ENCODE measurements at regions of chr6 and their contacts with region 1.

Region 1: GRCh38 chr6:70706491-70707123 is 38.9 kb downstream of the SMAP1 start:
- DNase-seq: no peak
- H3K4me3 Mint-ChIP-seq: no peak overlapping the region
- H3K27ac Mint-ChIP-seq: no peak overlapping the region
- H3K4me1 Mint-ChIP-seq: peaks cover 41% of the 10 kb centered on the region
- H3K27me3 Mint-ChIP-seq: no peaks in the 10 kb centered on the region

Region 2: GRCh38 chr6:70221025-70221714 is 485.4 kb before region 1 on chr6:
- CTCF ChIA-PET with region 1: no interaction called
- intact Hi-C with region 1: loop called (anchors 5 kb)
- DNase-seq: no peak
- H3K4me3 Mint-ChIP-seq: no peak overlapping the region
- H3K27ac Mint-ChIP-seq: no peak overlapping the region
- H3K4me1 Mint-ChIP-seq: no peaks in the 10 kb centered on the region
- H3K27me3 Mint-ChIP-seq: peaks cover 13% of the 10 kb centered on the region

Region 3: DNA sequence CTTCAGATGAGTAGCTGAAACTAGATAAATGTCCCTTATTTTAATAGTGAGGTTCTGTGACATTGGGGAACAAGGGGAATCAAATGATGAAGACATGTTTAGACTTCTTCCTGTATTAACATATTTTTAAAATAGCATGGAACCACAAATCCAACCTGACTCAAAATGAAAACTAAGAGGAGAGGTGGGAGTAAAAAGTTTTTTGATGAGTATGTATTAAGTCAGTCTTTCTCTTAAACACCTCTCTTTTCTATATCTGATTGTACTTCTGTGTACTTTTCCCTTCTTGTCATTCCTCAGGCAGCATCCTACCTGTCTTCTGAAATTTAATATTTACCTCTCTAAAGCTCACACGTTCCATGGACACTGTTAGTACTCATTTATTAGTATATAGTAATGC is 148.6 kb before region 1 on chr6:
- CTCF ChIA-PET with region 1: no interaction called
- intact Hi-C with region 1: no loop called
- DNase-seq: no peak
- H3K4me3 Mint-ChIP-seq: no peak overlapping the region
- H3K27ac Mint-ChIP-seq: peak overlapping the region; percentile 64
- H3K4me1 Mint-ChIP-seq: peaks cover 21% of the 10 kb centered on the region
- H3K27me3 Mint-ChIP-seq: no peaks in the 10 kb centered on the region

Region 4: DNA sequence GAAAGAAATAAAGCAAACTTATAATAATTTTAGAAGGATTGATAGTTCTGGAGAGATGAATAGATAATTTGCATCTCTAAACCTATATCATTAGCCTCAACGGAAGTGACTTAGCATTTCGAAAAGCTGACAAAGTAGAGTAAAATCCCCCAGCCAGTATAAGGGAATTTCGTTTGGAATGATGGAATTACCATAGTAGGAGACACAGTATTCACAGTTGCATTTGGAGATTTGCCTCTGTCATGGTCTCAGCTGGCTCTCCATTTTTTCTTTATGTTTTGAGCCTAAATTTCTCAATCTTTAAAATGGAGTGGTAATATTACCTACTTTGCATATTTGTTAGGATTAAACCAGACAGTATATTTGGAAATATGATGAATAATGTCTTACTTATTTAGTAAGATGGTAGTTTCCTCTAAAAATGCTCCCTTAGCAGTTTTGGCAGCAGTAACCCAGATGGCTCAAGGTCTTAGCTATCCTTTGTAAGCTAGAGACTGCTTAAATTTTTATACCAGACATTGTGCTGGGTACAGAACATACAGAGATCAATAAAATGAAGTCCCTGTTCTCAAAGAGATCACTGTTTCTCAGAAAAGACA is 19.3 kb after region 1 on chr6:
- CTCF ChIA-PET with region 1: interaction called, 4 read pairs
- intact Hi-C with region 1: loop called (anchors 2 kb)
- DNase-seq: no peak
- H3K4me3 Mint-ChIP-seq: no peak overlapping the region
- H3K27ac Mint-ChIP-seq: no peak overlapping the region
- H3K4me1 Mint-ChIP-seq: peaks cover 41% of the 10 kb centered on the region
- H3K27me3 Mint-ChIP-seq: no peaks in the 10 kb centered on the region

Region 5: DNA sequence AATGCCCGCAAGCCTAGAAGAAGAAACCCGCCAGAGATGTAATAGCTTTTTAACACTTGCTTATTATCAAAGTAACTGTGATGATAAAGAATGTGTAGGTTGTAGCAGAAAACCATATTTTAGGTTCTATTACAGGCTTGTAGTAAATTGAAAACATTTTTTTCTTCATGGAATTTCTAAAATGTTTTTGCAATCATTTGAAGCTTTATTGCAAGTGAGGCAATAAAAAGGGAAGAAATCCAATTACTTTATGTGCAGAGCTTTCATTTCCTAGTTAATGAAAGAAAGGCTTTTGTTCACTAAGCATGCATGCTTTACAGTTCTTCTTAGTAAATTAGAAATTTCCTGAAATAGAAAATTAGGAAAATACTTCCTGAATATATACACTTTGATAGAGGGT is 115.1 kb after region 1 on chr6:
- CTCF ChIA-PET with region 1: interaction called, 10 read pairs
- intact Hi-C with region 1: no loop called
- DNase-seq: no peak
- H3K4me3 Mint-ChIP-seq: no peak overlapping the region
- H3K27ac Mint-ChIP-seq: no peak overlapping the region
- H3K4me1 Mint-ChIP-seq: no peaks in the 10 kb centered on the region
- H3K27me3 Mint-ChIP-seq: no peaks in the 10 kb centered on the region

Region 6: DNA sequence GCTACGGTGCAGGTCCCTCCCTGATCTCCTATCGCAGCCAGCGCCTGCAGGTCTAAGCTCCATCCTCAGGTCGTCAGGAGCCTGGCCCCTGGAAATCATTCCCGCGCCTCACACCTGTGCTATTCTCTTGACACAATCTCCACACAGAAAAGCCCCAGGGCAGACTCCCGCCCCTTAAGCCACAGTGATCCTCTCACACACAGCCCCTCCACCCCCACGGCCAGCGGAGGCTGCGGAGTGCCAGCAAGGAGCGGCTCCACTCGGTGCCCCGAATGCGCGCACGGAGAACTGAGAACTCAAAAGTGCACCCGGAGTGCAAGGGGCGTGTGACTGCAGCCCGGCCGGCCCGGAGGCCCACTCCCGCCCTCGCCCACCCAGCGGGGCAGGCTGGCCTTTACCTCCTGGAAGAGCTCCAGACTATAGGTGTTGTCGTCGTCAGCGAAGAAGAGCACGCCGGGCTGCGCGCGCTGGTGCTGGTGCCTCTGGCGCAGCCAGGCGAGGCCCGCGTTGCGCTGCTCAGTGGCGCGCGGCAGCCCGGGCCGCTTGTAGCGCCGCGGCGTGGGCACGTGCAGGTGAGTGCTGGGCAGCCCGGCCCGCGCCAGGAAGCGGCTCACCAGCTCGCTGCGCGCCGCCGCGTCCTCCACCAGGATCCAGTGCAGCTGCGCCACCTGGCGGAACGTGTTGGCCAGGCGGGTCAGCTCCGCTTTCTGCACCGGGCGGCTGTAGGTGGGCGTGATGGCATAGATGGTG is 249.0 kb after region 1 on chr6:
- CTCF ChIA-PET with region 1: interaction called, 25 read pairs
- intact Hi-C with region 1: loop called (anchors 1 kb)
- DNase-seq: peak; percentile 93
- H3K4me3 Mint-ChIP-seq: peak overlapping the region; percentile 74
- H3K27ac Mint-ChIP-seq: no peak overlapping the region
- H3K4me1 Mint-ChIP-seq: peaks cover 4% of the 10 kb centered on the region
- H3K27me3 Mint-ChIP-seq: peaks cover 49% of the 10 kb centered on the region

Region 7: GRCh38 chr6:71072508-71072907 is 365.9 kb after region 1 on chr6:
- CTCF ChIA-PET with region 1: no interaction called
- intact Hi-C with region 1: no loop called
- DNase-seq: no peak
- H3K4me3 Mint-ChIP-seq: no peak overlapping the region
- H3K27ac Mint-ChIP-seq: no peak overlapping the region
- H3K4me1 Mint-ChIP-seq: no peaks in the 10 kb centered on the region
- H3K27me3 Mint-ChIP-seq: peaks cover 3% of the 10 kb centered on the region

Region 8: GRCh38 chr6:71349395-71349794 is 642.8 kb after region 1 on chr6:
- CTCF ChIA-PET with region 1: interaction called, 3 read pairs
- intact Hi-C with region 1: loop called (anchors 5 kb)
- DNase-seq: no peak
- H3K4me3 Mint-ChIP-seq: no peak overlapping the region
- H3K27ac Mint-ChIP-seq: no peak overlapping the region
- H3K4me1 Mint-ChIP-seq: peaks cover 2% of the 10 kb centered on the region
- H3K27me3 Mint-ChIP-seq: peaks cover 2% of the 10 kb centered on the region

Measured in activated naive CD4-positive, alpha-beta T cell treated with anti-CD3 and anti-CD28 coated beads for 36 hours (primary cell).